Activated B cell treated with CpG ODN at 0.5 μM for 24 hours (primary cell): ENCODE measurements at regions of chr19 and their contacts with region 1.

Region 1: GRCh38 chr19:2236314-2237050 is at the starts of genes PLEKHJ1 and SF3A2:
- DNase-seq: peak; percentile 100
- ATAC-seq: peak; percentile 82
- H3K4me3 Mint-ChIP-seq: peak within 1 kb of the TSS; percentile 99
- H3K27ac Mint-ChIP-seq: peak within 1 kb of the TSS; percentile 99
- H3K4me1 Mint-ChIP-seq: peaks cover 69% of the 10 kb centered on the region
- H3K27me3 Mint-ChIP-seq: no peaks in the 10 kb centered on the region
- CTCF ChIP-seq: no peak
- total RNA-seq, gene PLEKHJ1: 74.4 and 74.9 TPM in 2 replicates
- total RNA-seq, gene SF3A2: 107 and 117 TPM in 2 replicates

Region 2: DNA sequence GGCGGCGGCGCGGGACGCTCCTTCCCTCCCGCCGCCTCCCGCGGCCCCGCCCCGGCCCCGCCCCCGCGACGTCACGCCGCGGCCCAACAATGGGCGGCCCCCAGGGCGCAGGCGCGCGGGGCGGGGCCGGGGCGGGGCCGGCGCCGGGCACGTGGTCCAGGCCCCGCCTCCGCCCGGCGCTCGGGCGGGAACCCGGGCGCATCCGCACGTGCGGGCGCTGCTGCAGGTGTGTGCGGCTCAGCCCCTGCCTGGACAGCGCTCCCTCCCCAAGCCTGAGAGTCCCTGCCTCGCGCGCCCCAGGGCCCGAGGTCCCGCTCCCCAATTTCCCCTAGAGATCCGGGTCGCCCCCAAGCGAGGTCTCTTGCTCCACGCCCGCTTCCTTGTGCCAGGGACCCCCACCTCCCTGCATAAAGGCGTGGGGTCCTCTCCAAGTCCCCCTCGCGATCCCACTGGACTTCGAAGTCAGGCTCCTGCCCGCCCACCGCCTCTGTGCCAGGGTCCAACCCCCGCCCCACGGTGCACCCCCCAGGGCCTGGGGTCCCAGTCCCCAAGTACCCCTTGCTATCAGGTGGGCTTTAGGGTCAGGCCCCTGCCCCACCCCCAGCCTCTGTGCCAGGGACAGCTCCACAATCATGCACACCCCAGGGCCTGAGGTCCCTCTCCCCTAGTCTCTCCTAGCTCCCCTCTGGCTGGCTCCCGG is 668.0 kb before region 1 on chr19 and contains the start of gene MEX3D:
- CTCF ChIA-PET with region 1: no interaction called
- POLR2A ChIA-PET with region 1: no interaction called
- intact Hi-C with region 1: no loop called
- DNase-seq: peak; percentile 77
- ATAC-seq: peak; percentile 93
- H3K4me3 Mint-ChIP-seq: peak within 1 kb of the TSS; percentile 57
- H3K27ac Mint-ChIP-seq: no peak within 1 kb of the TSS
- H3K4me1 Mint-ChIP-seq: peaks cover 5% of the 10 kb centered on the region
- H3K27me3 Mint-ChIP-seq: no peaks in the 10 kb centered on the region
- CTCF ChIP-seq: no peak
- total RNA-seq, gene MEX3D: 2.1 and 2.5 TPM in 2 replicates

Region 3: DNA sequence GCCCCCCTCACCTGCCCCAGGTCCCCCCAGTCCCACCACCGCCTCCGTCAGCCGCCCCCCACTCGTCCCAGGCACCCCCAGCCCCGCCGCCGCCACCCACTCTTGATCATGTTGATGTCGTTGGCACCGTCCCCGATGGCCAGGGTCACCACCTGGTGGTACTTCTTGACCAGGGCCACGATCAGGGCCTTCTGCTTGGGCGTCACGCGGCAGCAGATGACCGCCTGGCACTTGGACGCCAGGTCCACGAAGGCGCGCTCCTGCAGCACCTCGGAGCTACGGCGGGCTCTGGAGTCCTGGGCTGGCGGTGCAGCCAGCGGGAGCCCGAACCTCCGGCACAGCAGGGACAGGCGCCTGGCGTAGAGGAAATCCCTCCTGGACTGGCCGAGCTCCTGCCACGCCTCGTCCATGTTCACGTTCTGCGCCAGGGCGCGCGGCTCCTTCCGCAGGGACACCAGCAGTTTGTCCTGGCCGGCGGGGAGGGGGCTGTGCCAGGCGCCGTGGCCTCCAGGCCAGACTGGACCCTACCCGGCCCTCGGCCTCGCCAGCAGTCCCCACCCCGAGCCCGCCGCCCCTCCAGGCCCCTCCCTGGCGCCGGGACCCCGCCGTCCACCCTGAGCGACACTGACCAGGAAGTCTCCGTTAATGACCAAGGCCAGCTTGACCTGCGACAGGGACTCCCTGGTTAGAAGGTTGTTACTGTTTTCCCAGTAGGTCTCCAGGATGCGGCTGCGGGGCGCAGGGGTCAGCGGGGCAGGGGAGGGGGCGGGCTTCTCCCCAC is 447.0 kb before region 1 on chr19:
- CTCF ChIA-PET with region 1: no interaction called
- POLR2A ChIA-PET with region 1: no interaction called
- intact Hi-C with region 1: no loop called
- DNase-seq: no peak
- ATAC-seq: no peak
- H3K4me3 Mint-ChIP-seq: no peak overlapping the region
- H3K27ac Mint-ChIP-seq: no peak overlapping the region
- H3K4me1 Mint-ChIP-seq: no peaks in the 10 kb centered on the region
- H3K27me3 Mint-ChIP-seq: peaks cover 15% of the 10 kb centered on the region
- CTCF ChIP-seq: no peak

Region 4: DNA sequence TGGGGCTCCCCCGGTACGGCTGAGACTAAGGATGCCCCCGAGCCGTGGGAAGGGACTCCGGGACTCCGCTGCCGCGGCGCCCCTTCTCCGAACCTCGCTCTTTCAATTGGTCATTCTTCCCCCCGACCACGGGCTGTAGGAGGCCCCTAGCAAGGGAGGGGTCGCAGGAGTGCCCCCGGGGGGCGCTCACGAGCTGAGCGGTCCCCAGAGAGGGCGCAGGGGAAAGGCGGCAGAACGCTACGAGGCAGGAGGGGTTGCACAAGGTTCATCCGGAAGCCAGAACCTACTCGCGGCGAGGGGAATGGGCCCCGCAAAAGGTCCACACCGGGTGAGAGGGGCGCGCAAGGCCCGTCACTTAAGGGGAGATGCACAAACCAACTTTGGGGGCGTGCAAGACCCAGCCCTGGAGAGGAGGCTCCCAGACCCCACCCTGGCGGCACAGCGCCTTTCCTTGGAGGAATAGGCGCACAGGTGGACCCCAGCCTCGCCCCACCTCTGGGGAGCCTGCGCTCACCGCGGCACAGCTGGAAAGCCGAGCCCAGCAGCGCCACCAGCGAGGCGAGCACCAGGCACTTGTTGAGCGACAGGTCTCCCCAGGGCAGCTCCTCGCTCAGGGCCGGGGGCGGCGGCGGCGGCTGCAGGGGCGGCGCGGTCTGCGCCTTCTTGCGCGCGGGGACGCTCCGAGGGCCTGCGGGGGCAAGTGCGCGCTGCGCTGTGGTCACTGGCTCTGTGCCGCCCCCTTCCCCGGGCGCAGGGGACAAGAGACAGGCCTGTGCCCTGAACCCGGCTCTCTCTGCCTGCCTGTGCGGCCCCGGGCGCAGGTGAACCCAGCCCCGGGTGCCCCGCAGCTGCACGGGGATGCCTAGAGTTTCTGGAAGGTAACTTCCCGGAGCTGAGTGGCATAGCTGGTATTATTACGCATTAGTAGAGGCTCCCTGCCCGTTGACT is 16.9 kb after region 1 on chr19:
- CTCF ChIA-PET with region 1: interaction called, 4 read pairs
- POLR2A ChIA-PET with region 1: interaction called, 22 read pairs
- intact Hi-C with region 1: loop called (anchors 1 kb)
- DNase-seq: peak; percentile 59
- ATAC-seq: peak; percentile 29
- H3K4me3 Mint-ChIP-seq: peak overlapping the region; percentile 70
- H3K27ac Mint-ChIP-seq: no peak overlapping the region
- H3K4me1 Mint-ChIP-seq: peaks cover 49% of the 10 kb centered on the region
- H3K27me3 Mint-ChIP-seq: peaks cover 2% of the 10 kb centered on the region
- CTCF ChIP-seq: no peak

Region 5: GRCh38 chr19:2315818-2316353 is 79.4 kb after region 1 on chr19:
- CTCF ChIA-PET with region 1: no interaction called
- POLR2A ChIA-PET with region 1: interaction called, 8 read pairs
- intact Hi-C with region 1: loop called (anchors 1 kb)
- DNase-seq: peak; percentile 54
- ATAC-seq: peak; percentile 74
- H3K4me3 Mint-ChIP-seq: peak overlapping the region; percentile 59
- H3K27ac Mint-ChIP-seq: peak overlapping the region; percentile 82
- H3K4me1 Mint-ChIP-seq: peaks cover 55% of the 10 kb centered on the region
- H3K27me3 Mint-ChIP-seq: no peaks in the 10 kb centered on the region
- CTCF ChIP-seq: no peak

Region 6: DNA sequence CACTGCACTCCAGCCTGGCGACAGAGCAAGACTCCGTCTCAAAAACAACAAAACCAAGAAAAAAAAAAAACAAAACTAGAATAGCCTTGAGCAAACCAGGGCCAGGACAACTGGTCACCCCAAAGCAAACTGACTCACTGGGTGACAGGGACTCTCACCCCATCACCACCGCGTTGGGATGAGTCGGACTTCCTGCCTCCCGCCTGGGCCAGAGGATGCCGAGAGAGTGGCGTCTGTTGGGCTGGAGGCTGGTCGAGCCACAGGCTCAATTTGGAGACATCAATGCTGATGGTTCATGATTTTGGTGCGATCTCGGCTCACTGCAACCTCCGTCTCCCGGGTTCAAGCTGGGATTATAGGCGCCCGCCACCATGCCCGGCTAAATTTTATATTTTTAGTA is 135.2 kb after region 1 on chr19:
- CTCF ChIA-PET with region 1: no interaction called
- POLR2A ChIA-PET with region 1: no interaction called
- intact Hi-C with region 1: no loop called
- DNase-seq: no peak
- ATAC-seq: no peak
- H3K4me3 Mint-ChIP-seq: no peak overlapping the region
- H3K27ac Mint-ChIP-seq: no peak overlapping the region
- H3K4me1 Mint-ChIP-seq: no peaks in the 10 kb centered on the region
- H3K27me3 Mint-ChIP-seq: no peaks in the 10 kb centered on the region
- CTCF ChIP-seq: no peak

Region 7: GRCh38 chr19:2391118-2391725 is 154.7 kb after region 1 on chr19:
- CTCF ChIA-PET with region 1: interaction called, 4 read pairs
- POLR2A ChIA-PET with region 1: interaction called, 4 read pairs
- intact Hi-C with region 1: loop called (anchors 1 kb)
- DNase-seq: no peak
- ATAC-seq: peak; percentile 56
- H3K4me3 Mint-ChIP-seq: no peak overlapping the region
- H3K27ac Mint-ChIP-seq: peak overlapping the region; percentile 74
- H3K4me1 Mint-ChIP-seq: peaks cover 34% of the 10 kb centered on the region
- H3K27me3 Mint-ChIP-seq: no peaks in the 10 kb centered on the region
- CTCF ChIP-seq: peak; percentile 82

Region 8: DNA sequence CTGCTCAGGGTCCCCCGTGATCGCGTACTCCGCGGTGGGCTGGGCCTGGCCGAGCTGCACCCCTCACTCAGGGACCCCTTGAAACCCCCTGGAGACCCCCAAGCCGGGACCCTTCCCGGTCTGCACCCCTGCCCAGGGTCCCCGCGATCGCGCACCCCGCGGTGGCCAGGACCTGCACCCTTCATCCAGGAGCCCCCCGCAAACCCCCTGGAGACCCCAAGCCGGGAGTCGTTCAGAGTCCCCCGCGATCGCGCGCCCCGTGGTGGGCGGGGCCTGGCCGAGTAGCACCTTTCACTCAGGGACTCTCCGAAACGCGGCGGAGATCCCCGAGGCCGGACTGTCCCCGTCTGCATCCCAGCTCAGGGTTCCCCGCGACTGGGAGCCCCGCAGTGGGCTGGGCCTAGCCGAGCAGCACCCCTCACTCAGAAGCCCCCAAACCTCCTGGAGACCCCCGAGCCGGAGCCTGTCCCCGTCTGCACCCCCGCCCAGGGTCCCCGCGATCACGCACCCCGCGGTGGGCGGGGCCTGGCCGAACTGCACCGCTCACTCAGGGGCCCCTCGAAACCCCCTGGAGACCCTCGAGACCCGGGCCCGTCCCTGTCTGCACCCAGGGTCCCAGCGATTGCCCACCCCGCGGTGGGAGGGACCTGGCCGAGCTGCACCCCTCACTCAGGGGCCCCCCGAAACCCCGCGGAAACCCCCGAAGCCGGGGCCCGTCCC is 219.5 kb after region 1 on chr19:
- CTCF ChIA-PET with region 1: no interaction called
- POLR2A ChIA-PET with region 1: interaction called, 4 read pairs
- intact Hi-C with region 1: loop called (anchors 1 kb)
- DNase-seq: peak; percentile 51
- ATAC-seq: peak; percentile 53
- H3K4me3 Mint-ChIP-seq: peak overlapping the region; percentile 89
- H3K27ac Mint-ChIP-seq: peak overlapping the region; percentile 85
- H3K4me1 Mint-ChIP-seq: peaks cover 30% of the 10 kb centered on the region
- H3K27me3 Mint-ChIP-seq: no peaks in the 10 kb centered on the region
- CTCF ChIP-seq: no peak

Region 9: DNA sequence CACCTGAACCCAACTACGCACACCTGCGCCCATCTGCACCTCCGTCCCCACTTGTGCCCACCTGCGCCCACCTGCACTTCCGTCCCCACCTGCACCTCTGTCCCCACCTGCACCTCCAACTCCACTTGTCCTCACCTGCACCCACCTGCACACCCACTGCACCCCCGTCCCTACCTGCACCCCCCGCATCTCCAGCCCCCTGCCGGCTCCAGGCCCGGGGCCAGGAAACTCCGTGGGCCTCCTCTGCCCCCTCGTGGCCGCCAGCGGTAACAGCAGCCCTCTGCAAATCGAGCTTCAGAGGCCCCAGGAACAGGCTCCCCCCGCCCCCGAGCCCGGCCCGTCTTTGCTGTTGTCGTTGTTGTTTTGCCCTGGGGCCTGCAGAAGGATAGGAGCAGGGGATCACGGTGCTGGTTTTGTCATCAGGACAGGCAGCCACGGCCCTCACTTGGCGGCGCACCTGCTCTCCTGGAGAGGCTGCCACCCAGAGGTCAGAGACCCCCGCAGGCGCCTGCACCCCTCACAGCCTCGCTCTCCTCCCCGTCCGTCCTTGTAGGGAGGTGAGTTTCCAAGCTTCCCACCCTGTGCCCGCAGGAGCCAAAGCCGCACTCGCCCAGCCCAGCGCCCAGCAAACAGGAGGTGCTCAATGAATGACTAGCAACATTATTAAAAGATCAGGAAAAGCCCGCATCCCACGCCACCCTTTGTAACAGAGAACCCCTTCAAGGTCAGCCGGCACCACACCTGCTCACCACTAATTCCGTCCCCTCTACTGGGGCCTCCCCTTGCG is 400.6 kb after region 1 on chr19:
- CTCF ChIA-PET with region 1: no interaction called
- POLR2A ChIA-PET with region 1: no interaction called
- intact Hi-C with region 1: loop called (anchors 1 kb)
- DNase-seq: peak; percentile 74
- ATAC-seq: peak; percentile 52
- H3K4me3 Mint-ChIP-seq: peak overlapping the region; percentile 53
- H3K27ac Mint-ChIP-seq: peak overlapping the region; percentile 74
- H3K4me1 Mint-ChIP-seq: peaks cover 87% of the 10 kb centered on the region
- H3K27me3 Mint-ChIP-seq: no peaks in the 10 kb centered on the region
- CTCF ChIP-seq: peak; percentile 31